Caco-2 (cell line): ENCODE measurements at regions of chr6 and their contacts with region 1.

Region 1: DNA sequence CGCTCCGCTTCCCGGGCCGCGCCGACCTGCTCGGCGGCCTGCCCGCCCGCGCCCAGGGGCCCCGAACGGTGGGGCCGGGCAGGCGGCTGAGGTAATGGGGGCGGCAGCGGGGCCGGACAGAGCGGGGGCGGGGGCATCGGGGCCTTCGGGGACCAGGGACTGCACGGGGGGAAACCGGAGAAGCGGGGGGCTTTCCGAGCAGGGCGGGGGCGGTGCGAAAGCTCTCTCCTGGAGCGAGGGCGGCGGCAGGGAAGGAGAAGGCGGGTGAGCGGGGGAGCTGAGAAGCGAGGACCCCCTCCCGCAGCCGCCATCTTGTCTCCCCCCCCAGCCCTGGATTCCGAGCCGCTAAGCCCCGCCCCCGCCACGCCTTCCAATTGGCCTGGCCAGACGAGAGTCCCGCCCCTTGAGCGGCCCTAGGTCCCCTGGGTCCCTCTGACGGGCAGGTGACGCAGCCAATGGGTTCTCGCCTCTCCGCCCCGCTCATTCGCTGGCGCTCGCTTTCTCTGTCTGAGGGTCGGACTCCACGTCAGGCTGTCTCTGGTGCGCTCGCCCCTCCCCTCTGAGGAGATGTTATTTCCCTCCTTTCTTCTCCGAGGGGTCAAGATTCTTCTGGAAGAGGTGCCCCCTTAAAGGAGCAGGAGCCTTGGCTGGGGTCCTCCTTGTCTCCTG is 470 bp downstream of the BRPF3 start:
- DNase-seq: peak; percentile 99
- H3K4me3 ChIP-seq: peak overlapping the region; percentile 76
- H3K4me3 Mint-ChIP-seq: peak overlapping the region; percentile 82
- H3K27ac Mint-ChIP-seq: peak overlapping the region; percentile 83
- H3K4me1 ChIP-seq: no peaks in the 10 kb centered on the region
- H3K4me1 Mint-ChIP-seq: peaks cover 6% of the 10 kb centered on the region
- H3K27me3 ChIP-seq: no peaks in the 10 kb centered on the region
- H3K27me3 Mint-ChIP-seq: no peaks in the 10 kb centered on the region
- CTCF ChIP-seq: no peak

Region 2: GRCh38 chr6:36123257-36124139 is 73.5 kb before region 1 on chr6:
- CTCF ChIA-PET with region 1: no interaction called
- POLR2A ChIA-PET with region 1: no interaction called
- intact Hi-C with region 1: loop called (anchors 2 kb)
- DNase-seq: peak; percentile 76 to 84
- H3K4me3 ChIP-seq: no peak overlapping the region
- H3K4me3 Mint-ChIP-seq: no peak overlapping the region
- H3K27ac Mint-ChIP-seq: peak overlapping the region; percentile 53
- H3K4me1 ChIP-seq: peaks cover 18% of the 10 kb centered on the region
- H3K4me1 Mint-ChIP-seq: peaks cover 7% of the 10 kb centered on the region
- H3K27me3 ChIP-seq: no peaks in the 10 kb centered on the region
- H3K27me3 Mint-ChIP-seq: no peaks in the 10 kb centered on the region
- CTCF ChIP-seq: peak; percentile 59 to 83

Region 3: DNA sequence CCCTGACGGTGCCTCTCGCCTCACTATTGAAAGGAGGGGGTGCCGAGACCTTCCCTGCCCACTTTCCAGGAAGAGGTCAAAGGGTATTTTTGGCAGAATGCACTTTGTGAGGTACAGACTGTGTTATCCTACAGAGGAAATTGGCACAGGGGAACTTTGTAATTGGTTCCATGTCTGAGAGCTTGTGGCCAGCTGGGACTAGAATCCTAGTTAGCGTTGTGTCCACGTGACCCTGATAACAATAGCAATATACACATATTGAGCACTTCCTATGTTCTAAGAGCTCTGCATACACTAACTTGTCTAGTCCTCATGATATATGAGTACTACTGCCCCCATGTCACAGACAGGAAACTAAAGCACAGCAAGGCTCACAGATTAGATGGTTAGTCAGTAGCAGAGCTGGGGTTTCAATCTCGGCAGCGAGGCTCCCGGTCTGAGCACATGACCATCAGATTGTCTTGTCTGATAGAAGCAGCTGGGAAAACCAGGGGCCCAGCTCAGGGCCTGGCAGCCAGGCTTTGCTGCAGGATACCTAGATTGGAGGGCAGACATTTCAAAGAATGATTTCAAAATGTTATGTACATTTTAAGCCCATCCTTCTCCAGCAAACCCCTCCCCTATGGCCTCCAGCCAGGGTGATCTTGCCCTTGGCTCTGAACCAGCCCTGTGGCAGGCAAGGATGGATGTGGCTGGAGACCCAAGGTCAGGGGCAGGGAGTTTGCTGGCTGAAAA is 65.3 kb before region 1 on chr6:
- CTCF ChIA-PET with region 1: no interaction called
- POLR2A ChIA-PET with region 1: interaction called, 10 read pairs
- intact Hi-C with region 1: loop called (anchors 1 kb)
- DNase-seq: peak in 1 of 2 experiments; percentile 33
- H3K4me3 ChIP-seq: peak overlapping the region; percentile 90
- H3K4me3 Mint-ChIP-seq: peak overlapping the region; percentile 82
- H3K27ac Mint-ChIP-seq: peak overlapping the region; percentile 82
- H3K4me1 ChIP-seq: peaks cover 13% of the 10 kb centered on the region
- H3K4me1 Mint-ChIP-seq: peaks cover 12% of the 10 kb centered on the region
- H3K27me3 ChIP-seq: no peaks in the 10 kb centered on the region
- H3K27me3 Mint-ChIP-seq: no peaks in the 10 kb centered on the region
- CTCF ChIP-seq: no peak

Region 4: DNA sequence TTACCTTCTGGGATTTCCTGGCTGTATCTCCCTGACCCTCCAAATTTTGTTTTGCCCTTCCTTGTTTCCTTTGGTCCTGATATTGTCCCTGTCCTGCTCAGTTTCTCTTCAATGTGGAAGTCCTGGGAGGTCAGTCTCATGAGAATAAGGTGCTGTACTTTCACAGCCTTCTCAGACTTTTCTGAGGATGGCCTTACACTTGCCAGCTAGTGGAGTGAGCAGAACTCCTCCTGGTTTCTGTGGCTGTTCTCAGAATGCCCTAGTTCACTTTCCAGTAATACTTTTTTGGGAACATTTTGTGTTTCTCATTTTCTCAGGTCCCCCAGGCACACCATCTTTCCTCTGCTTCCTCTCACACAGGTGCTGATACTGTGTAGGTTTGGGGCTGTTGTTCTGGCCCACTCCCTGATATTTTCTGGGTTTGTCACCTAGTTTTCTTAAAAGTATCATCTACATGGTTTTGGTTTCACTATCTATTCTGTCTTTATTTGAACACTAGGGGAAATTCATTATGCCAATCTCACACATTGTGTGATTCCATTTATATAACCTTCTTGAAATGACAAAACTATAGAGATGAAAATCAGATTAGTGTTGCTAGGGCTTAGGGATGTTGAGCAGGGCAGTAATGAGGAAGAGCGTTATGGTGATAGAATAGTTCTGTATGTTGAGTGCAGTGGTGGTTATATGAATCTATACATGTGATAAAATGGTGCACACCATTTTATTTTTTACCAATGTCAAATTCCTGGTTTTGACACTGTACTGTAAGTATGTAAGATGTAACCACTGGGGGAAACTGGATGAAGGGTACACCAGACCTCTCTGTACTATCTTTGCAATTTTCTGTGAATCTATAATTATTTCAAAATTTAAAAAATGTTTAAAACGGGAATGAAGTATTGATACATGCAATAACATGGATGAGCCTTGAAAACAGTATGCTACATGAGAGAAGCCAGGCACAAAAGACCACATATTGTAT is 27.7 kb before region 1 on chr6:
- CTCF ChIA-PET with region 1: no interaction called
- POLR2A ChIA-PET with region 1: no interaction called
- intact Hi-C with region 1: no loop called
- DNase-seq: no peak
- H3K4me3 ChIP-seq: no peak overlapping the region
- H3K4me3 Mint-ChIP-seq: no peak overlapping the region
- H3K27ac Mint-ChIP-seq: no peak overlapping the region
- H3K4me1 ChIP-seq: no peaks in the 10 kb centered on the region
- H3K4me1 Mint-ChIP-seq: no peaks in the 10 kb centered on the region
- H3K27me3 ChIP-seq: no peaks in the 10 kb centered on the region
- H3K27me3 Mint-ChIP-seq: peaks cover 12% of the 10 kb centered on the region
- CTCF ChIP-seq: no peak